Activated CD4-positive, alpha-beta T cell treated with anti-CD3 and anti-CD28 coated beads for 36 hours (primary cell): ENCODE measurements at regions of chr5 and their contacts with region 1.

Region 1: GRCh38 chr5:151115274-151115905 is 34.6 kb upstream of the TNIP1 start:
- DNase-seq: peak; percentile 84
- ATAC-seq: peak; percentile 76
- H3K4me3 Mint-ChIP-seq: no peak overlapping the region
- H3K27ac Mint-ChIP-seq: peak overlapping the region; percentile 24
- H3K4me1 Mint-ChIP-seq: peaks cover 2% of the 10 kb centered on the region
- H3K27me3 Mint-ChIP-seq: no peaks in the 10 kb centered on the region

Region 2: DNA sequence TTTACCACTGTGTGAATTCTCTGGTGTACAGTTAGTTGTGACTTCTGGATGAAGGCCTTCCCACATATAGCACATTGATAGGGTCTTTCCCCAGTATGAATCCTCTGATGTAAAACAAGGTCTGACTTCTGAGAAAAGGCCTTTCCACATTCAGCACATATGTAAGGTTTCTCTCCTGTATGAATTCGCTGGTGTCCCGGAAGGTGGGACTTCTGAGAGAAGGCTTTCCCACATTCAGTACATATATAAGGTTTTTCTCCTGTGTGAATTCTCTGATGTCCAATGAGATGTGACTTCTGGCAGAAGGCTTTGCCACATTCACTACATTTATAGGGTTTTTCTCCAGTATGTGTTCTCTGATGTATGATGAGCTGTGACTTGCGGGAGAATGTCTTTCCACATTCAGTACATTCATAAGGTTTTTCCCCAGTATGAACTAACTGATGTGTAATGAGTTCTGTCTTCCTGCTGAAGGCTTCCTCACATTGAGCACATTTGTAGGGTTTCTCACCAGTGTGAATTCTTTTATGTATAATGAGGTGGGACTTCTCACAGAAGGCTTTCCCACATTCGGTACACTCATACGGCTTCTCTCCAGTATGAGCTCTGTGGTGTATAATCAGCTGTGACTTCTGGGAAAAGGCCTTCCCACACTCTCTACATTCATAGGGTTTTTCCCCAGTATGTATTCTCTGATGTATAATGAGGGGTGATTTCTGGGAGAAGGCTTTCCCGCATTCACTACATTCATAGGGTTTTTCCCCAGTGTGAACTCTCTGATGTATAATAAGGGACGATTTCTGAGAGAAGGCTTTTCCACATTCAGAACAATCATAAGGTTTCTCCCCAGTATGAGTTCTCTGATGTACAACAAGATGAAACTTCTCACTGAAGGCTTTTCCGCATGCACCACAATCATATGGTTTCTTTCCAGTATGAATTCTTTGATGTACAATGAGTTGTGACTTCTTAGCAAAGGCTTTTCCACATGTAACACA is 219.7 kb before region 1 on chr5:
- CTCF ChIA-PET with region 1: no interaction called
- POLR2A ChIA-PET with region 1: no interaction called
- intact Hi-C with region 1: no loop called
- DNase-seq: no peak
- ATAC-seq: no peak
- H3K4me3 Mint-ChIP-seq: no peak overlapping the region
- H3K27ac Mint-ChIP-seq: no peak overlapping the region
- H3K4me1 Mint-ChIP-seq: no peaks in the 10 kb centered on the region
- H3K27me3 Mint-ChIP-seq: no peaks in the 10 kb centered on the region

Region 3: GRCh38 chr5:151002250-151002649 is 113.1 kb before region 1 on chr5:
- CTCF ChIA-PET with region 1: interaction called, 25 read pairs
- POLR2A ChIA-PET with region 1: no interaction called
- intact Hi-C with region 1: loop called (anchors 1 to 5 kb)
- DNase-seq: no peak
- ATAC-seq: no peak
- H3K4me3 Mint-ChIP-seq: no peak overlapping the region
- H3K27ac Mint-ChIP-seq: no peak overlapping the region
- H3K4me1 Mint-ChIP-seq: no peaks in the 10 kb centered on the region
- H3K27me3 Mint-ChIP-seq: peaks cover 2% of the 10 kb centered on the region

Region 4: DNA sequence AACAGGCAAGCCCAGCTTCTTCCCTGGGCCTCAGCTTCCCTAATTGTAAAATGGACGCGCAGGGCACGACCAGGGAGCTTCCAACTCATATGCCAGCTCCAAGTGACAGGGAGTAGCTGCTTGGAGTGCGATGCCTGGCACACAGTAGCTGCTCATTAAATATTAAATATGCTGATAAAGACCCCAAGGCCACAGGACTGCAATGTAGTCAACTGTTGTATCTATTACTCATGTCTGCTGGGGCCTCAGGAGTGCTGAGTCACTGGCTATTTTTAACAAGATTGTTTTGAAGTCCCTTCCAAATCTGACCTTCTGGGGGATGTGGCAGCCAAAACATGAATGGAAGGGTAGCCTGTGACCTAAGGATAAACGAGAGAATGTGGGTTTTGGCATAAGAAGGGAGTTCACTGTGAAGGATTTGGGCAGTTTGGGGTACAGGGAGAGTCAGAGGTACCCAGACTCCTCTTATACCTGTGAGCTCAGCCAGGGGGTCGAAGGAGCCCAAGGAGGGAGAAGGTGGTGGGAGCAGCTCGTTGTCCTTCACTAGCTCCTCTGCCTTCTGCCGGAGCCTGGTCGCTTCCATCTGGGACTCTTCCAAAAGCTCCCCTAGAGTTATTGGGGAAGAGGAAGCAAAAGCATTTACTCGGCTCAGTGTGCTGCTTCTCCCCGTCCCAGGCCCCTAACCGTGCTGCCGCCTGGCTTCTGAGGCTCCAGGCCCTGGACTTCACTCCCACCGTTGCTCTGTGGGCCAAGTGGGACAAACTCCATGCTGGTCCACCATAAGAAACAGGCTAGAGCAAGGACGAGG is 52.0 kb before region 1 on chr5:
- CTCF ChIA-PET with region 1: interaction called, 32 read pairs
- POLR2A ChIA-PET with region 1: interaction called, 4 read pairs
- intact Hi-C with region 1: loop called in 1 of 2 experiments (anchors 2 kb)
- DNase-seq: no peak
- ATAC-seq: no peak
- H3K4me3 Mint-ChIP-seq: no peak overlapping the region
- H3K27ac Mint-ChIP-seq: peak overlapping the region; percentile 87
- H3K4me1 Mint-ChIP-seq: peaks cover 96% of the 10 kb centered on the region
- H3K27me3 Mint-ChIP-seq: no peaks in the 10 kb centered on the region

Region 5: GRCh38 chr5:151086905-151087360 is 28.5 kb before region 1 on chr5:
- CTCF ChIA-PET with region 1: interaction called, 37 read pairs
- POLR2A ChIA-PET with region 1: no interaction called
- intact Hi-C with region 1: no loop called
- DNase-seq: peak; percentile 85
- ATAC-seq: peak; percentile 78
- H3K4me3 Mint-ChIP-seq: peak overlapping the region; percentile 80
- H3K27ac Mint-ChIP-seq: peak overlapping the region; percentile 86
- H3K4me1 Mint-ChIP-seq: peaks cover 57% of the 10 kb centered on the region
- H3K27me3 Mint-ChIP-seq: no peaks in the 10 kb centered on the region

Region 6: DNA sequence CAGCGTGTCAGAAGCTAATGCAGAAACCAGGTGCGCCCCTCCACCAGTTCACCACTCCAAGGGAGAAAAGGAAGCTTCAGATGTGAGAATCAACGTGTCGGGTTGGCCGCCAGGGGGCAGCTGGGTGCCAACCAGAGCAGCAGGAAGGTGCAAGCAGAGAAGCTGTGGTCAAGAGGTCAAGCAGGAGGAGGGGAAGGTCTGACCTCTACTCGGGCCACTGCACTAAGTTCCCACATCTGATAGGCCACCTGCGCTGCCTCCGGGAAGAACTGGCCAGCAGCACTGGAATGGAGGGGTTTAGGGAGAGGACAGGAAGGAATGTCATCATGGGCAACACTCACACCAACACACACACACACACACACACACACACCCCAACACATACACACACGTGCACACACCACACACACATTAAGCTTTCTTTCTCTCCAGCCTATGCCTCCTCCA is 10.8 kb after region 1 on chr5:
- CTCF ChIA-PET with region 1: interaction called, 138 read pairs
- POLR2A ChIA-PET with region 1: interaction called, 5 read pairs
- intact Hi-C with region 1: no loop called
- DNase-seq: peak; percentile 81
- ATAC-seq: peak; percentile 44
- H3K4me3 Mint-ChIP-seq: no peak overlapping the region
- H3K27ac Mint-ChIP-seq: peak overlapping the region; percentile 62
- H3K4me1 Mint-ChIP-seq: peaks cover 75% of the 10 kb centered on the region
- H3K27me3 Mint-ChIP-seq: no peaks in the 10 kb centered on the region

Region 7: GRCh38 chr5:151157426-151158286 is 42.3 kb after region 1 on chr5 and contains the start of gene ANXA6:
- CTCF ChIA-PET with region 1: interaction called, 685 read pairs
- POLR2A ChIA-PET with region 1: interaction called, 10 read pairs
- intact Hi-C with region 1: no loop called
- DNase-seq: peak; percentile 80
- ATAC-seq: peak; percentile 47
- H3K4me3 Mint-ChIP-seq: peak within 1 kb of the TSS; percentile 91
- H3K27ac Mint-ChIP-seq: peak within 1 kb of the TSS; percentile 93
- H3K4me1 Mint-ChIP-seq: peaks cover 59% of the 10 kb centered on the region
- H3K27me3 Mint-ChIP-seq: no peaks in the 10 kb centered on the region
- total RNA-seq, gene ANXA6: 322 to 332 TPM

Region 8: GRCh38 chr5:151896031-151896691 is 780.8 kb after region 1 on chr5:
- CTCF ChIA-PET with region 1: no interaction called
- POLR2A ChIA-PET with region 1: no interaction called
- intact Hi-C with region 1: no loop called
- DNase-seq: no peak
- ATAC-seq: no peak
- H3K4me3 Mint-ChIP-seq: no peak overlapping the region
- H3K27ac Mint-ChIP-seq: no peak overlapping the region
- H3K4me1 Mint-ChIP-seq: peaks cover 2% of the 10 kb centered on the region
- H3K27me3 Mint-ChIP-seq: peaks cover 2% of the 10 kb centered on the region